ENCODE measurements at regions of chr10 and their contacts with region 1.

Region 1: DNA sequence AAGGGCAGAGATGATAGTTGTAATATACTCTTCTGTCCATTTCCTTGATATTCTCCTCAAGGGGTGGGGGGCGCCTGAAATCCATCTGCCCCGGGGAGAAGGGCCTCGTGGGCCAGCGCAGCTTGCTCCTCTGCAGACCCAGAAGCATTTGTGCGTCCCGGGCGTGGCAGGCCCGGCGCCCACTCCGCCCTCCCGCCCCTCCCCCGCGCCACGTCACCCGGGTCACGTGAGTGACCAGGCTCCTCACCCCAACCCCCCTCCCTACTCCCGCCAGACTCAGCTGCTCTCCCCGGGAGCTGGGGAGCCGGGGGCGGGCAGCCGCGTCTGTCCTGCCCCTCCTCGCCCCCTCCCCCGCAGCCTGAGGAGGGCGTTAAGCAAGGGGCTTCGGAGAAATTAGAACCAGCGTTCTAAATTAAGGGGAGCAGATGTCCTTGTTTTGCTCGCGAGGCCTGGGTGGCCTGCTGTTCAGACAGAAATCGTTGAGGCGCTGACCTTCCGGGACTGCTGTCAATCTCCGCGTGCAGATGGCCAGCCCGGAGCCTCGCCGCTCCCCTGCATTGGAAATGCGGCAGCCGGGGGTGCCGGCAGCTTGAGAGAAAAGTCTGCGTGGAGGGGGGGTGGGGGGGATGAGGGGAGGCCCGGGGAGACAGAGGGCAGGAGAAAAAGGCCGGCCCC is 102.1 kb upstream of the ZNF438 start:
- DNase-seq: peak; percentile 85
- H3K4me3 Mint-ChIP-seq: peak overlapping the region; percentile 87
- H3K27ac Mint-ChIP-seq: peak overlapping the region; percentile 98
- H3K4me1 Mint-ChIP-seq: peaks cover 43% of the 10 kb centered on the region
- H3K27me3 Mint-ChIP-seq: no peaks in the 10 kb centered on the region

Region 2: DNA sequence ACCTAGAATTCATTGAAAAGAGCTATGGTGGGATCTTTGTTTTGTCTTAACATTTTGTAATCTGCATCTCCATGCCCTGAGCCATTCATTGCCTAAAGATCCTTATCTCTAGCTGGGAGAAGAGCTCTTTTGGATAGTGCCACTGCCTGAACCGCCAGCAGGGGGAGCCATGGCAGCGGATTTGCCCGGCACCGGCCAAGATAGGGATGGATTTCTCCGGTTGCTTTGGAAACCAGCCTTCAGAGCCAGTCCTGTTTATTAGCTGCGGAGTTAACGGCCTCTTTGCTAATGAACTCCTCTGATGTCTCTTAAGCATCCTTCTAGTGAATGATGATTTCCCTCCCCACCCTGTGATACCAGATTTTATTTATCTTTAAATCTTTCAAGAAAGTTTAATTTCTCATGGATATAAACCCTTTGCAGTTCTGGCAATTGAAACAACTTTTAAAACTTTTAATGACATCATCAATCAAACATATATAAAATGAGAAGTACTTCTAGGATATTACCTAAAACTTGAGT is 446.0 kb before region 1 on chr10:
- intact Hi-C with region 1: loop called (anchors 10 kb)
- DNase-seq: peak; percentile 94
- H3K4me3 Mint-ChIP-seq: no peak overlapping the region
- H3K27ac Mint-ChIP-seq: peak overlapping the region; percentile 18
- H3K4me1 Mint-ChIP-seq: peaks cover 49% of the 10 kb centered on the region
- H3K27me3 Mint-ChIP-seq: peaks cover 3% of the 10 kb centered on the region

Region 3: DNA sequence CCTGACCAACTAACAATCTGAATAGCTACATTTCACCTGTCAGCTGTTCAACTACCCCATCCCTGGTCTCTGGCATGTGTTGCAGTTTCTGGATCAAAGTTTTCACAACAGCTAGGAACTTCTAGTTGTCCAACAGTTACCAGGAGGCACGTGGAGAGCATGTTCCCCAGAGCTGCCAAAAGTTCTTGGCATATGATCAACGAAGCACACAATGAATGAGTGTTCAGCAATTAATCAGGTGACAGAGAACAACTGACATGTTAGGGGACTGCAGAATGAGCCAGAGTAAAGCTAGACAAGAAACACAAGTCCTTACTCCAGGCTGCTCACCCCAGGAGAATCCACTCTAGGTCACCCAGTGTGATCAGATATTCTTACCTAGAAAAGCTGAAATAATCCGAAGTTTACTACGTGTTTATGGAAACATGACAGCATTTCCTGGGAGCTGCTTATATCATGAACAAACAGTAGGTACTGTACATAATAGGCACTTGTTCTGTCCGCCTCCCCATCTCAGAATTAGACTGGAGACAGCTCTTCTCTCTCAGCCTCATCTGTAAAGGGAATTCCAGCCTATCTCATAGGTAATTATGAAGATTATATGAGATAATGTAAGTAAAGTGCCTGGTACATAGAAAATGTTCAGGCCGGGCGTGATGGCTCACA is 152.7 kb before region 1 on chr10:
- intact Hi-C with region 1: loop called (anchors 10 kb)
- DNase-seq: peak; percentile 40
- H3K4me3 Mint-ChIP-seq: no peak overlapping the region
- H3K27ac Mint-ChIP-seq: no peak overlapping the region
- H3K4me1 Mint-ChIP-seq: peaks cover 9% of the 10 kb centered on the region
- H3K27me3 Mint-ChIP-seq: no peaks in the 10 kb centered on the region

Region 4: DNA sequence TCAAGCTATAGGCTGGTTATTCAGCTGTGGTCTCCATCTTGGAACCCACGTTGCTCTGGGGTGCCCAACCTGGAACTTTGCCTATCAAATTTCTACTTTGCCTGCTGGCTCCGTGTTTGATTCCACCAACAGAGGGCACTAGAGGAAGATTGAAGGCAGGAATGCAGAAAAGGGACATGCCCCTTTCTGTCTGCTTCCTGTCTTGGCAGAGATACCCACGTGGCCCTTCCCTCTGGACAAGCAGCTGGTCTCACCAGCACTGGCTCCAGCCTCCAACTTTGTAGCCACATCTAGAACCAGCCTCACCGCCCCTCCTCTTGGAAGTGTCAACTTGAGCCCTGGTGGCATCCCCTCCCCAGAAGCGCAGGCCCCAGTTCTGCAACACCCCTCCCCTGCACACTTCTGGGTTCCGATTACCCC is 50.0 kb before region 1 on chr10:
- intact Hi-C with region 1: loop called (anchors 10 kb)
- DNase-seq: peak; percentile 91
- H3K4me3 Mint-ChIP-seq: no peak overlapping the region
- H3K27ac Mint-ChIP-seq: peak overlapping the region; percentile 66
- H3K4me1 Mint-ChIP-seq: peaks cover 11% of the 10 kb centered on the region
- H3K27me3 Mint-ChIP-seq: no peaks in the 10 kb centered on the region

Region 5: DNA sequence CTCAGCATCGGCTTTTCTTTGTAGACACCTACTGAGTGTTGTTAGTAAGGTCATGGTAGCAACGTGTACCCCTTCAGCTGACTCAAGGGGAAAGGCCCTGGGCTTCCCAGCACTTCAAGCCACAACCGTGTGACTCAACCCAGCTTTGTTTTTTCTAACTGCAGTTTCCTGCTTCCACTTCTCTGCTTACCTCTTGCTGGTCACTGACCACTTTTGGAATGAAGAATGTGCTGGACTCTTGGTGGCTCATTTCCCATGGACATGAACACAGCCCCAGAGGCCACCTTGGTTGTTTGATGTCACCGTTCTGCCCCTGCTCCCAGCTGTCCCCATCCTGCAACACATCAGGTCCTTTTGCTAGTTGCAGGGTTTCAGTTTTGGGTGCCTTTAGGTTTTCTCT is 32.6 kb before region 1 on chr10:
- intact Hi-C with region 1: loop called (anchors 1 kb)
- DNase-seq: peak; percentile 89
- H3K4me3 Mint-ChIP-seq: peak overlapping the region; percentile 76
- H3K27ac Mint-ChIP-seq: peak overlapping the region; percentile 93
- H3K4me1 Mint-ChIP-seq: peaks cover 60% of the 10 kb centered on the region
- H3K27me3 Mint-ChIP-seq: no peaks in the 10 kb centered on the region

Region 6: DNA sequence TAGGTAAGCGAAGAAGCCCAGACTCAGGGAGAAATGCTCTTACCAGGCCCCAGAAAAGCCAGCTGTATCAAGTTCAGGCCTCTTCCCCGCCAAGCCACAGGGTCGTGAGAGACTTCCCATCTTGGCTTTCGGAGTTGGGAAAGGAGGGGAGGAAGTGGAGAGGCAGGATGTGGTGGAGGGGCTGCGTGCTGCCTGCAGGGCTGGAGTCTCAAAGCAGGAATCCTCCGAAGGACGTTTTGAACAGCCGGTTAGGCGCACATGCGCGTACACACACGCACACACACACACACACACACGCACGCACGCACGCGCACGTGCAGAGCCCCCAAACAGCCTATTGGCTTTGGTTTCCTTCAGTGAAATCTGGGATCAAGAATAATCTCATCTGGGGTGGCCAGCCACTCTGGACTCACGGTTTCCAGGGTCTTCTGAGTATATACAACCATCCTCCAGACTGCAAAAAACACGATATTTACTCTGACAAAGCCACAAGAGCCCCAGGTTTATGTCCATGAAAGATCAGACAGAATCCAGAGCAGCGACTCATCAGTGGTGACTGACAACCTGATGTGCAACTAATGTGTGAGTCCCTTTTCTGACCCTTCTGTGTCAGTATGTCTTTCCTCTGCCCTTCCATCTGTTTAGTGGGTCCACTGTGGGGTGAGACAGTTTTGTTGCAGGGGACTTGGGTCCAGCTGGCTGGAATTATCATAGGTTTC is 12.9 kb after region 1 on chr10:
- intact Hi-C with region 1: loop called (anchors 1 kb)
- DNase-seq: peak; percentile 67
- H3K4me3 Mint-ChIP-seq: peak overlapping the region; percentile 69
- H3K27ac Mint-ChIP-seq: peak overlapping the region; percentile 87
- H3K4me1 Mint-ChIP-seq: peaks cover 36% of the 10 kb centered on the region
- H3K27me3 Mint-ChIP-seq: no peaks in the 10 kb centered on the region

Region 7: DNA sequence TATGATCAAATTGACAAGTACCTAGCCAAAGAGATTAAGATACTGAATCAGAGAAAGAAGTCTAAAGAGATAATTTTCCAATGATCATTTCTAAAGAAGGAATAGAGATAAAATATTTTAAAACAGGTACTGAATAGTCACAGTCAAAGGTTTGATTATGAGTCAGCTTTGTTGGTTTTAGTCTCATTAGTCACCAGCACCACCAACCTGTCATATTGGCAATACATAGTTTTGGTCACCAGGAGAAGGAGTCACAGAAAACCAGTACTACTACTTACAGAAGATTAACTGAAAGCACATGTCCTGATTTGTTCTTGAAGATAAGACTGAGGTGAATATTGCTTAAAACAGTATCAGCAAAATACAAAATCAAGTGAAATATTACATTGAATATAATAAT is 219.8 kb after region 1 on chr10:
- intact Hi-C with region 1: loop called (anchors 1 kb)
- DNase-seq: peak; percentile 67
- H3K4me3 Mint-ChIP-seq: peak overlapping the region; percentile 25
- H3K27ac Mint-ChIP-seq: peak overlapping the region; percentile 80
- H3K4me1 Mint-ChIP-seq: peaks cover 39% of the 10 kb centered on the region
- H3K27me3 Mint-ChIP-seq: no peaks in the 10 kb centered on the region

Region 8: DNA sequence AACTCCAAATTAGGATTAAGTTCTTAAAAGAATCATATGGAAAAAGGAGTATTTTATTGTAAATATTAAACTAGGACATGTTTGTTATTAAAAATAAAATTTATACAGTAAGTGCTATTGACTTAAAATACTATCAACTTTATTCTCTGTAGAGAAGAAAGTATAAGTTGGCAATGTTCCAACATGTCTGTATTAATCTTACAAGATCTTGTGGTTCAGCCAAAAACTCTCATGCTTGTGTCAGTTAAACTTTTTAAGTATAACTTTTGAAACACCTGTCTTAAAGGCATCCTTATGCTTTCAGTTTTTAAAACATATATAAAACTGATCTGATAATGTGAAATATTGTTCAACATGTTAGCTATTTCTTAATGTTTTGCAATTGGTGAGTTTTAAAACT is 346.0 kb after region 1 on chr10:
- intact Hi-C with region 1: no loop called
- DNase-seq: no peak
- H3K4me3 Mint-ChIP-seq: no peak overlapping the region
- H3K27ac Mint-ChIP-seq: no peak overlapping the region
- H3K4me1 Mint-ChIP-seq: no peaks in the 10 kb centered on the region
- H3K27me3 Mint-ChIP-seq: no peaks in the 10 kb centered on the region

Measured in activated CD4-positive, alpha-beta T cell treated with anti-CD3 and anti-CD28 coated beads, Interleukin-2, amount 10 ng/mL, durations not matched to agents 24 days and 14 days (primary cell).